ENCODE measurements at regions of chrX and their contacts with region 1.

Region 1: DNA sequence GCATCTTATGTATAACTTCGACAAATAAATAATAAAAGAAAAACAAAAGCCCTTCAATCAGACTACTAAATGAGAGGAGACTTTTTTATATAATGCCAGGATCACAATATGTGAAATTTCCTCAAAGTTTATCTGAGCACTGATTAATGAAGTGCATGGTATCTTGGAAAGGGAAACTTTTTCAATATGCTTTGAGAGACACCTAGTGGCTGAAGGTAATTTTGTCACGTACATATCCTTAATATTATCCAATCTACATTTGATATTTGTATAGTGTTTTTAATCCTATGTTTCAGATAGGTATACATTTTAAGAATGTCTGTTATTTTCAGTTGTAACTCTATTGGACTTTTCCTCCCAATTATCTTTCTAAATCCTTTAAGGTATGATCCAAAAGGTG is 146.8 kb downstream of the KLHL4 start:
- DNase-seq: peak; percentile 50
- H3K4me3 Mint-ChIP-seq: no peak overlapping the region
- H3K27ac Mint-ChIP-seq: no peak overlapping the region
- H3K4me1 Mint-ChIP-seq: no peaks in the 10 kb centered on the region
- H3K27me3 Mint-ChIP-seq: no peaks in the 10 kb centered on the region
- CTCF ChIP-seq: peak; percentile 50

Region 2: GRCh38 chrX:87338510-87338909 is 325.9 kb before region 1 on chrX:
- CTCF ChIA-PET with region 1: interaction called, 4 read pairs
- POLR2A ChIA-PET with region 1: interaction called, 3 read pairs
- intact Hi-C with region 1: loop called (anchors 1 kb)
- DNase-seq: peak; percentile 49
- H3K4me3 Mint-ChIP-seq: no peak overlapping the region
- H3K27ac Mint-ChIP-seq: no peak overlapping the region
- H3K4me1 Mint-ChIP-seq: no peaks in the 10 kb centered on the region
- H3K27me3 Mint-ChIP-seq: peaks cover 17% of the 10 kb centered on the region
- CTCF ChIP-seq: peak; percentile 40

Region 3: DNA sequence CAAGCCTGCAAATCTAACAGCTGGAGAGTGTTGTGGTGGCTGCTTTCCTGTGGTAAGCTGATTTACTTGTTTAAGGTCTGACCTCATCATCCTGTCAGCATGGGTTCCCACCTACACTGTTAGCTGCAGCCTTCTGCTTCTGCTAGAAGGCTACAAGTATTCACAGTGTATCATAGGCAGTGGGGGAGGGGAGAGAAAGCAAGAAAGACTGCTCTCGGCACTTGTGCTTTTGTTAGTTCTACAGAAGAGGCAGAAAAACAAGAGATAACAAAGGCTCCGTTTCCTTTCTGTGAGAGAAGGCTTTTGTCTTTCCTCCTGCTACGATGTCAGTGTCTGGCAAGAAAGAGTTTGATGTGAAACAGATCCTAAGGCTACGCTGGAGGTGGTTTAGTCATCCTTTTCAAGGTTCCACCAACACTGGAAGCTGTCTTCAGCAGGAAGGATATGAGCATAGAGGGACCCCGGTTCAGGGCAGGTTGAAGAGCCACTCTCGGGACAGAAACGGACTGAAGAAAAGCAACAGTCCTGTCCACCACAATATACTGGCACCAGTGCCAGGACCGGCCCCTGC is 146.7 kb before region 1 on chrX and contains the start of gene KLHL4:
- CTCF ChIA-PET with region 1: no interaction called
- POLR2A ChIA-PET with region 1: no interaction called
- intact Hi-C with region 1: loop called (anchors 1 kb)
- DNase-seq: peak; percentile 66
- H3K4me3 Mint-ChIP-seq: peak within 1 kb of the TSS; percentile 78
- H3K27ac Mint-ChIP-seq: peak within 1 kb of the TSS; percentile 74
- H3K4me1 Mint-ChIP-seq: peaks cover 10% of the 10 kb centered on the region
- H3K27me3 Mint-ChIP-seq: peaks cover 15% of the 10 kb centered on the region
- CTCF ChIP-seq: no peak
- total RNA-seq, gene KLHL4: 8.7 and 9.8 TPM in 2 replicates

Region 4: GRCh38 chrX:87578975-87579374 is 85.4 kb before region 1 on chrX:
- CTCF ChIA-PET with region 1: interaction called, 4 read pairs
- POLR2A ChIA-PET with region 1: no interaction called
- intact Hi-C with region 1: loop called (anchors 2 kb)
- DNase-seq: no peak
- H3K4me3 Mint-ChIP-seq: no peak overlapping the region
- H3K27ac Mint-ChIP-seq: no peak overlapping the region
- H3K4me1 Mint-ChIP-seq: no peaks in the 10 kb centered on the region
- H3K27me3 Mint-ChIP-seq: peaks cover 18% of the 10 kb centered on the region
- CTCF ChIP-seq: no peak

Measured in MCF 10A (cell line).